ENCODE measurements at regions of chr9 and their contacts with region 1.

Region 1: GRCh38 chr9:94772639-94773303 is 46.3 kb downstream of the AOPEP start:
- DNase-seq: no peak
- ATAC-seq: no peak
- H3K4me3 ChIP-seq: no peak overlapping the region
- H3K27ac ChIP-seq: no peak overlapping the region
- H3K4me1 ChIP-seq: peaks cover 0 to 9% (median 0%) of the 10 kb centered on the region in 12 donors
- H3K27me3 ChIP-seq: no peaks in the 10 kb centered on the region
- CTCF ChIP-seq: no peak
- POLR2A ChIP-seq: no peak

Region 2: GRCh38 chr9:94687451-94687850 is 85.3 kb before region 1 on chr9:
- intact Hi-C with region 1: loop called in 4 of 10 experiments (anchors 5 to 10 kb)
- DNase-seq: no peak
- ATAC-seq: no peak
- H3K4me3 ChIP-seq: no peak overlapping the region
- H3K27ac ChIP-seq: no peak overlapping the region
- H3K4me1 ChIP-seq: peaks cover 0 to 5% (median 0%) of the 10 kb centered on the region in 12 donors
- H3K27me3 ChIP-seq: no peaks in the 10 kb centered on the region
- CTCF ChIP-seq: no peak
- POLR2A ChIP-seq: no peak

Region 3: GRCh38 chr9:94860968-94861871 is 88.4 kb after region 1 on chr9:
- intact Hi-C with region 1: no loop called
- DNase-seq: peak in 2 of 5 donors; percentile 26 to 31
- ATAC-seq: peak in 1 of 4 donors; percentile 54
- H3K4me3 ChIP-seq: no peak overlapping the region
- H3K27ac ChIP-seq: peak overlapping the region in 1 of 12 donors; percentile 42
- H3K4me1 ChIP-seq: peaks cover 0 to 44% (median 24%) of the 10 kb centered on the region in 12 donors
- H3K27me3 ChIP-seq: no peaks in the 10 kb centered on the region
- CTCF ChIP-seq: no peak
- POLR2A ChIP-seq: no peak

Region 4: GRCh38 chr9:94928691-94929372 is 156.1 kb after region 1 on chr9:
- intact Hi-C with region 1: no loop called
- DNase-seq: no peak
- ATAC-seq: no peak
- H3K4me3 ChIP-seq: no peak overlapping the region
- H3K27ac ChIP-seq: peak overlapping the region in 11 of 12 donors; percentile 42 to 82 (median 75)
- H3K4me1 ChIP-seq: peaks cover 3 to 54% (median 19%) of the 10 kb centered on the region in 12 donors
- H3K27me3 ChIP-seq: no peaks in the 10 kb centered on the region
- CTCF ChIP-seq: no peak
- POLR2A ChIP-seq: no peak

Region 5: GRCh38 chr9:95057101-95057500 is 284.3 kb after region 1 on chr9:
- intact Hi-C with region 1: no loop called
- DNase-seq: no peak
- ATAC-seq: peak in 2 of 4 donors; percentile 17 to 29
- H3K4me3 ChIP-seq: peak overlapping the region in 9 of 12 donors; percentile 23 to 50 (median 32)
- H3K27ac ChIP-seq: peak overlapping the region; percentile 20 to 86 (median 75)
- H3K4me1 ChIP-seq: peaks cover 11 to 98% (median 83%) of the 10 kb centered on the region in 12 donors
- H3K27me3 ChIP-seq: no peaks in the 10 kb centered on the region
- CTCF ChIP-seq: no peak
- POLR2A ChIP-seq: no peak